ENCODE measurements at regions of chr6 and their contacts with region 1.

Region 1: GRCh38 chr6:78611958-78612357 is 255.4 kb upstream of the IRAK1BP1 start:
- DNase-seq: no peak
- H3K4me3 Mint-ChIP-seq: peak overlapping the region; percentile 8
- H3K27ac Mint-ChIP-seq: peak overlapping the region; percentile 82
- H3K4me1 Mint-ChIP-seq: peaks cover 41% of the 10 kb centered on the region
- H3K27me3 Mint-ChIP-seq: no peaks in the 10 kb centered on the region
- CTCF ChIP-seq: peak; percentile 46

Region 2: GRCh38 chr6:78436335-78436734 is 175.6 kb before region 1 on chr6:
- CTCF ChIA-PET with region 1: no interaction called
- intact Hi-C with region 1: loop called (anchors 5 kb)
- DNase-seq: peak; percentile 46
- H3K4me3 Mint-ChIP-seq: no peak overlapping the region
- H3K27ac Mint-ChIP-seq: no peak overlapping the region
- H3K4me1 Mint-ChIP-seq: no peaks in the 10 kb centered on the region
- H3K27me3 Mint-ChIP-seq: no peaks in the 10 kb centered on the region
- CTCF ChIP-seq: peak; percentile 47

Region 3: DNA sequence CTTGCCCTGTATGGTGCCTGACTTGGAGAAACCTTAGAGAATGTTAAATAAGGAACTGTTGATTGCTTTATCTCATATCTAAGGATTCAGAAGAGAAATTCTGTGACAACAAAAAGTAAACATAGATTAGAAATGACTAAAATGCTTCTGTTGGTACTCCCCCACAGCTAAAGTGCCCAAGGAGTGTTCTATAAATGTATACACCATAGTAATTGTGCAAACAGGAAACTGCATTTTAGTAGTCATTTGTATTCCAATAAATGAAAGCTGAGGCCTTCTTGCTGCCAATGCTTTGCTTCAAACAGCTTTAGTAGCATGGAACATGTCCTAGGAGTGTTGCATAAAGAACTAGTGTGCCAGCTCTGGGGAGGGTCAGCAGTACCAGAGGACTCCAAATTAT is 88.3 kb before region 1 on chr6:
- CTCF ChIA-PET with region 1: no interaction called
- intact Hi-C with region 1: loop called (anchors 5 kb)
- DNase-seq: no peak
- H3K4me3 Mint-ChIP-seq: no peak overlapping the region
- H3K27ac Mint-ChIP-seq: no peak overlapping the region
- H3K4me1 Mint-ChIP-seq: no peaks in the 10 kb centered on the region
- H3K27me3 Mint-ChIP-seq: no peaks in the 10 kb centered on the region
- CTCF ChIP-seq: no peak

Region 4: DNA sequence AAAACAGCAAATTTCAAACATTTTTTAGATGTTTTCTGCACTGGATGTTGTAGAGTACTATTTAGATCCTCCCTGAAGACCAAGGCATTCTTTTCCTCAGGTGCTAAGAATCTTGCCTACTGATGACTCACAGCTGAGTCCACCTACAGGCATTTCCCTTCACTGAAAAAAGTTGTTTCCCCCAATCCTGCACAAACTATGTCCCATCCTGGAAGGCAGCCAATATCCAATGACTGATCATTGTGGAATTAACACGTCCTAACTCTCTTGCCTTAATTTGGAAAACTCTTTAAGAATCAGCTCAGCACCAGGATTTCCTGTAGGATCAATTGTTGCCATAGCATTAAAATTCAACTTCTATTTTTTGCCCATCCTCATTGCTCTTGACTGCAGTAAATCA is 13.0 kb before region 1 on chr6:
- CTCF ChIA-PET with region 1: interaction called, 10 read pairs
- intact Hi-C with region 1: no loop called
- DNase-seq: peak; percentile 86
- H3K4me3 Mint-ChIP-seq: no peak overlapping the region
- H3K27ac Mint-ChIP-seq: peak overlapping the region; percentile 96
- H3K4me1 Mint-ChIP-seq: peaks cover 75% of the 10 kb centered on the region
- H3K27me3 Mint-ChIP-seq: no peaks in the 10 kb centered on the region
- CTCF ChIP-seq: no peak

Measured in Calu3 (cell line).